Activated naive CD4-positive, alpha-beta T cell treated with anti-CD3 and anti-CD28 coated beads for 36 hours (primary cell): ENCODE measurements at regions of chr3 and their contacts with region 1.

Region 1: GRCh38 chr3:71195492-71195891 is 388.0 kb downstream of the FOXP1 start:
- DNase-seq: no peak
- H3K4me3 Mint-ChIP-seq: no peak overlapping the region
- H3K27ac Mint-ChIP-seq: no peak overlapping the region
- H3K4me1 Mint-ChIP-seq: peaks cover 71% of the 10 kb centered on the region
- H3K27me3 Mint-ChIP-seq: no peaks in the 10 kb centered on the region

Region 2: DNA sequence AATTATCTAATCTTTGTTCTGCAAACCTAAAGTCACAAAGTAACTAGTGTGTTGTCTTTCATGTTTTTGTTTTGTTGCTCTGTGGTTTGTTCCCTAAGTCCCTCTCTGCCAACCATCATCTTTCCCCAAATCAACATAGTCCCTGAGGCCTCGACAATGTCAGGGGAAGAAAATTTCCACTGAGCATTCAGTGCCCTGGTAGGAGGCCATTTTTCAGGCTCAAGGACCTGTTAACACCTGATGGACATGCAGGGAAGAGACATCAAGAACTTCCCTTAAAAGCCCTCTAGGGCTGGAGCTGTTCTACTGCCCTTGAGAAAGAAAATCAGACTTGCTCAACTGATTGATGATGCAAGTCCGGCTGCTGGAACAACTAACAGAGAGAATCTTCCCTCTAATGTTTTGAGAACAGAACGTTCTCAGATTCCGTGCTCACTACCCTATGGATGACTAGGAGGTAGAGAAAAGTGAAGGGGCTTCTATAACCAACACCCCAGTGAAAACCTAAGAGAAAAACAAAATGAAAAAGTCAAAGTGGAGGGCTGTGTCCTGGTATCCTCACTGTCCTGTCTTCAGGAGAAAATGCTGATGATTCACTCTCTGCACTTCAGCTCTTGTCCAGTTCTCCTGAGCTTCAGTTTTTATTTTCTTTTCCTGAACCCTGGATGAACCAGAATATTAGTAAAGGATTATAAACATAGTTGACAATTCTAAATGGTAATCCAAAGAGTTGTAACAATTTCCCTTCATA is 14.9 kb after region 1 on chr3:
- CTCF ChIA-PET with region 1: interaction called, 4 read pairs
- intact Hi-C with region 1: loop called (anchors 1 kb)
- DNase-seq: no peak
- H3K4me3 Mint-ChIP-seq: peak overlapping the region; percentile 44
- H3K27ac Mint-ChIP-seq: peak overlapping the region; percentile 83
- H3K4me1 Mint-ChIP-seq: peaks cover 81% of the 10 kb centered on the region
- H3K27me3 Mint-ChIP-seq: no peaks in the 10 kb centered on the region

Region 3: DNA sequence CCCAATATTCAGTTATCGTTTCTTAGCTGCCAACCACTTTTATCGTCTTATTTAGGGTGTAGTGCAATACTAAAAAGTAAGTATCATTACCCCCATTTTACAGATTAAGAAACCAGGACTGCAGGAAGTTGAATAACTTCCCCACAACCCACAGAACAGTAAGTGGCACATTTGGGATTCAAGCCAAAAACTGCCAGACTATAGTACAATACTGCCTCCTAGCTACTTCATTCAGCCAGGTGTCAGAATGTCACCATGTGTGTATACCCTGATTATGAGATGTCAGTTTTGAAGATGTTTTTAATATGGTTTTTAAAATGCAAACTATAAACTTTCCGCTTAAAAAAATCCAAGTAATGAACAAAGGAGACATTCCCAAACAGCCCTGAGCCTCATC is 663.6 kb after region 1 on chr3:
- CTCF ChIA-PET with region 1: no interaction called
- intact Hi-C with region 1: no loop called
- DNase-seq: peak; percentile 38
- H3K4me3 Mint-ChIP-seq: no peak overlapping the region
- H3K27ac Mint-ChIP-seq: no peak overlapping the region
- H3K4me1 Mint-ChIP-seq: peaks cover 3% of the 10 kb centered on the region
- H3K27me3 Mint-ChIP-seq: peaks cover 9% of the 10 kb centered on the region